ENCODE measurements at regions of chr4 and their contacts with region 1.

Region 1: GRCh38 chr4:169612871-169613859 is 782 bp upstream of the NEK1 start:
- DNase-seq: peak; percentile 70
- ATAC-seq: peak; percentile 76
- H3K4me3 ChIP-seq: peak overlapping the region; percentile 71 to 99 (median 83)
- H3K27ac ChIP-seq: peak overlapping the region; percentile 38
- H3K4me1 ChIP-seq: peaks cover 40% of the 10 kb centered on the region
- H3K27me3 ChIP-seq: no peaks in the 10 kb centered on the region; a peak in 2 of 5 replicates
- CTCF ChIP-seq: peak; percentile 83
- EP300 ChIP-seq: no peak
- POLR2A ChIP-seq: no peak
- RAD21 ChIP-seq: peak; percentile 61

Region 2: GRCh38 chr4:169238445-169238844 is 374.7 kb before region 1 on chr4:
- CTCF ChIA-PET with region 1: no interaction called
- POLR2A ChIA-PET with region 1: no interaction called
- in situ Hi-C with region 1: no loop called
- intact Hi-C with region 1: no loop called
- DNase-seq: no peak
- ATAC-seq: no peak
- H3K4me3 ChIP-seq: no peak overlapping the region
- H3K27ac ChIP-seq: no peak overlapping the region
- H3K4me1 ChIP-seq: peaks cover 2% of the 10 kb centered on the region
- H3K27me3 ChIP-seq: no peaks in the 10 kb centered on the region
- CTCF ChIP-seq: no peak
- EP300 ChIP-seq: no peak
- POLR2A ChIP-seq: no peak
- RAD21 ChIP-seq: no peak

Region 3: GRCh38 chr4:169723207-169723965 is 110.2 kb after region 1 on chr4:
- CTCF ChIA-PET with region 1: interaction called, 10 read pairs
- POLR2A ChIA-PET with region 1: interaction called, 3 read pairs
- in situ Hi-C with region 1: loop called (anchors 10 kb)
- intact Hi-C with region 1: loop called (anchors 1 kb)
- DNase-seq: peak; percentile 25
- ATAC-seq: peak; percentile 71
- H3K4me3 ChIP-seq: no peak overlapping the region
- H3K27ac ChIP-seq: no peak overlapping the region
- H3K4me1 ChIP-seq: no peaks in the 10 kb centered on the region
- H3K27me3 ChIP-seq: no peaks in the 10 kb centered on the region
- CTCF ChIP-seq: peak; percentile 63
- EP300 ChIP-seq: no peak
- POLR2A ChIP-seq: no peak
- RAD21 ChIP-seq: no peak

Region 4: GRCh38 chr4:169791527-169792156 is 178.5 kb after region 1 on chr4:
- CTCF ChIA-PET with region 1: no interaction called
- POLR2A ChIA-PET with region 1: no interaction called
- in situ Hi-C with region 1: no loop called
- intact Hi-C with region 1: loop called (anchors 2 kb)
- DNase-seq: peak; percentile 54
- ATAC-seq: peak; percentile 98
- H3K4me3 ChIP-seq: peak overlapping the region in 2 of 3 experiments; percentile 15 to 37; a peak in 4 of 6 replicates
- H3K27ac ChIP-seq: no peak overlapping the region
- H3K4me1 ChIP-seq: peaks cover 13% of the 10 kb centered on the region
- H3K27me3 ChIP-seq: peaks cover 0 to 8% of the 10 kb centered on the region in 2 experiments; a peak in 3 of 5 replicates
- CTCF ChIP-seq: peak; percentile 59
- EP300 ChIP-seq: no peak
- POLR2A ChIP-seq: no peak
- RAD21 ChIP-seq: no peak